Gastrocnemius medialis (tissue), 4 donors: ENCODE measurements at regions of chr5 and their contacts with region 1.

Region 1: GRCh38 chr5:38463634-38464521 is 92.6 kb downstream of the LIFR start:
- DNase-seq: peak in 1 of 2 donors; percentile 56
- ATAC-seq: peak; percentile 7 to 12
- H3K4me3 ChIP-seq: no peak overlapping the region
- H3K27ac ChIP-seq: peak overlapping the region; percentile 95 to 99 (median 97)
- H3K4me1 ChIP-seq: peaks cover 66 to 67% of the 10 kb centered on the region in 2 donors
- H3K27me3 ChIP-seq: no peaks in the 10 kb centered on the region
- CTCF ChIP-seq: no peak
- POLR2A ChIP-seq: no peak

Region 2: DNA sequence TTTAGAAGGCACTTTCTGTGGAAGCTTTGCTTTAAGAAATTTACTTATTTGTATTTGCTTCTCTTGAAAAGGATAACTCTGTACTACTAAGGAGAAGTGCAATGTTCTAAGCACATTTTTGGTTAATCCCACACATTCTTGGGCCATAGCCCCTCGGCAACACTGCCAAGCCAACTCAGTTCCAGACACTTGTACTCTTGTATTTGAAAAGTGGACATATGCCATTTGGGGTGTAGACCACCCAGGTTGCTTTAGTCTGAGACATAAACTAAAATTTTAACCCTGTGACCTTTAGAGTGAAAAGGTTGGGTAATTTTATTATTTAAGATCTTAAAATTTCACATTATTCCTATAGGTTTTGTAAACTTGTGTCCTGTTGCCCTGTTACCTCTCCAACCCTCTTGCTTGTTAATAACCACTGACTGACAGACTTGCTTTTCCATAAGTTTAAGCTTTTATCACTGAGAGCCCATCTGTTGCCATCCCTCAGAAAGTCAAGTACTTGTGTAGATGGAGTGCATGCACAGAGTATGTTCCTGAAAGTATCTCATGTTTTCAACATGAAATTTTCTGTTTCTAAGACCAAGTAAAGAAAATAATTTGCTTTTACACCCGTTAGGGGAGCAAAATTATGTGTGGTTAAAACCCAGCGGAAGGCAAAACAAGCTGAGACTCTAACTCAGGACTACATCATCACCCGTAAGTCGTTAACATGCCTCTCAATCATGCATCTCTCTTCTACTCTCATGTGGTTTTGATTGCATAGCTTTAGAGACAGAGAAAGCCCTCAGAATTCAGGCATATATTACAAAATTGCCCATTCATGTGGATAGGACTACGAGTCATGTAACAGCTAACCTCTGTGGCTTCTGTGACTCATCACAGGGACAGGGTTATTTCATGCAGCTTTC is 741.4 kb before region 1 on chr5:
- in situ Hi-C with region 1: no loop called
- intact Hi-C with region 1: loop called (anchors 10 kb)
- DNase-seq: no peak
- ATAC-seq: no peak
- H3K4me3 ChIP-seq: no peak overlapping the region
- H3K27ac ChIP-seq: peak overlapping the region in 3 of 4 donors; percentile 63 to 79 (median 73)
- H3K4me1 ChIP-seq: peaks cover 10 to 24% of the 10 kb centered on the region in 2 donors
- H3K27me3 ChIP-seq: no peaks in the 10 kb centered on the region
- CTCF ChIP-seq: no peak
- POLR2A ChIP-seq: no peak

Region 3: DNA sequence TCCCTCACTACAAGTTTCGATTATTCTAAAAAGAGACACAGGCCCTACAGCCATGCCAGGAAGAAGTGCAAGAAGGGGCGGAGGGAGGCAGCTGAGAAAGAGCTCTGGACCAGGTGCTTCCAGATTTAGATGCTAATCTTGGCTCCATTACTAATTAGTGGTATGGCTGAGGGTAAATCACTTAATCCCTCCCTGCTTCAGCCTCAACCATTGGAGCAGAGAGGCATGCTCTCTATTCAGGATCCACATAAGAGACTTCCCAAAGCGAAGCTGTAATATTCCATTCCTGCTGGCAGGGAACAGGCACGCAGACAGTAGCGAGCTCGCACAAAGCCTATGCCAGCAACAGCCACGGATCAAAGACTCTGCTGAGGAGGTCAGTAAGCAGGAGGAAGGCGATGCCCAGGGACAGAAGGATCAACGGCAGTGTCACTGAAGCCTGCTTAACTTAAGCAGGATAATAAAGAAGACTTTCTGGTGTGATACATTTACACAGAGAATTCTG is 68.3 kb after region 1 on chr5:
- in situ Hi-C with region 1: no loop called
- intact Hi-C with region 1: loop called (anchors 1 kb)
- DNase-seq: no peak
- ATAC-seq: peak; percentile 28 to 56
- H3K4me3 ChIP-seq: peak overlapping the region in 1 of 4 donors; percentile 18
- H3K27ac ChIP-seq: peak overlapping the region; percentile 78 to 87 (median 85)
- H3K4me1 ChIP-seq: peaks cover 60 to 73% of the 10 kb centered on the region in 2 donors
- H3K27me3 ChIP-seq: no peaks in the 10 kb centered on the region
- CTCF ChIP-seq: no peak
- POLR2A ChIP-seq: no peak

Region 4: GRCh38 chr5:38556599-38557305 is 92.9 kb after region 1 on chr5 and contains the start of gene LIFR:
- in situ Hi-C with region 1: no loop called
- intact Hi-C with region 1: loop called (anchors 5 kb)
- DNase-seq: peak; percentile 59 to 79
- ATAC-seq: peak; percentile 79 to 88
- H3K4me3 ChIP-seq: peak within 1 kb of the TSS; percentile 89 to 94 (median 92)
- H3K27ac ChIP-seq: peak within 1 kb of the TSS; percentile 97 to 99 (median 98)
- H3K4me1 ChIP-seq: peaks cover 19 to 51% of the 10 kb centered on the region in 2 donors
- H3K27me3 ChIP-seq: no peaks in the 10 kb centered on the region
- CTCF ChIP-seq: peak in 2 of 5 experiments; percentile 18 to 25
- POLR2A ChIP-seq: peak; percentile 77 to 86
- total RNA-seq, gene LIFR: 80.0 to 233 (median 89.5) TPM

Region 5: DNA sequence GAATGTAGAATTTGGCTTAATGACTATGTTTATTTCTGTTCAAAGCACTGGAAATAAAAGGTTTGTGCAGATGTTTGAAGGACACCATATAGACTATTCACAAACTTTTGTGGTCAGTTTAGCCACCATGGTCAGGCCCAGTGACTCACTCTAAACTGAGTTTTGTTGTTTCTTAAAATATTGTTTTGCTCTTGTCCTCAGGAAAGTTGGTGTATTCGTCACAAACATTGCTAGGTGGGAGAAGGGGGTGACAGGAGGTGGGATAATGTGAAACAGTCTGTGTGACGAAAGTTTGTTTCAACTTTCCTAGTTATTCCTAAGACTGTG is 127.6 kb after region 1 on chr5:
- in situ Hi-C with region 1: no loop called
- intact Hi-C with region 1: loop called (anchors 5 kb)
- DNase-seq: no peak
- ATAC-seq: no peak
- H3K4me3 ChIP-seq: no peak overlapping the region
- H3K27ac ChIP-seq: peak overlapping the region; percentile 71 to 91 (median 84)
- H3K4me1 ChIP-seq: peaks cover 27 to 32% of the 10 kb centered on the region in 2 donors
- H3K27me3 ChIP-seq: no peaks in the 10 kb centered on the region
- CTCF ChIP-seq: no peak
- POLR2A ChIP-seq: no peak

Region 6: GRCh38 chr5:39074016-39074886 is 610.4 kb after region 1 on chr5 and contains the start of gene RICTOR:
- in situ Hi-C with region 1: no loop called
- intact Hi-C with region 1: loop called (anchors 5 kb)
- DNase-seq: peak; percentile 81 to 85
- ATAC-seq: peak; percentile 84 to 86
- H3K4me3 ChIP-seq: peak within 1 kb of the TSS; percentile 89 to 95 (median 94)
- H3K27ac ChIP-seq: peak within 1 kb of the TSS; percentile 98 to 100 (median 99)
- H3K4me1 ChIP-seq: peaks cover 40 to 45% of the 10 kb centered on the region in 2 donors
- H3K27me3 ChIP-seq: no peaks in the 10 kb centered on the region
- CTCF ChIP-seq: no peak
- POLR2A ChIP-seq: peak; percentile 71 to 87
- total RNA-seq, gene RICTOR: 28.9 to 56.9 (median 37.0) TPM